ENCODE measurements at regions of chr4 and their contacts with region 1.

Region 1: DNA sequence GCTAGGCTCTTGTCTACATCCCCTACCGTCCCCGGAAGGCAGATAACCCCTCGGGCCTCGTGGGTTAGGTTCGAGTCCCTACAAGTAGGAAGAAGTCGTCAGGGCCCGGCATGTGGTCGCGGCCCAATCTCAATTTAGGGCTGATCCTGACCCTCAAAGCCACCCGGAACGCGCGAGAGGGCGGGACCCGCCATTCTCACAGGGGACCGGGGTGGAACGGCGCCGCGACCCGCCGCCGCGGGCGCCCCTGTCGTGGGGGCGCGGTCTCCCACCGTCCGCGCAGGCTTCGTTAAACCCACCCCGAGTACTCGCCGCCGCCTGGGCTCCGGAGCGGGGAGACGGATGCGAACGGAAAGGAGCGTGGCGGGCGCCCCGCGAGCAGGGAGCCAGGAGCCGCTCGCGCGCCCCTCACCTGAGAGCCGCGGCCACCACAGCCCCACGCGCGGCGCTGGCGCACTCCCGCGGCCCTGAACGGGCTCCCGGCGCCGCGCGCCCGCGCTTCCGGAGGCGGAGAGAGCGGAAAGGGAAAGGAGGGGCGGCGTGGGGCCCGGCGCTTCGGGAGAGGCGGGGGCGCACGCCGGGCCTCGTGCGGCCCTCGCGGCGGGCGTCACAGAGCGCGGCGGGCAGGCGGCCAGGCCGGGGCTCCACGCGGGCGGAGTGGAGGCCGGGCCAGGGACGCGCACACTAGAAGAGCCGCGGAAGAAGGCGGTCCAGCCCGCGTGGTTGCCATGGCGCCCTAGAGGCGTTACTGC is at the start of gene CFAP97:
- DNase-seq: peak; percentile 67 to 95 (median 82)
- ATAC-seq: peak; percentile 79
- H3K4me3 ChIP-seq: peak within 1 kb of the TSS; percentile 64 to 83
- H3K4me3 Mint-ChIP-seq: peak within 1 kb of the TSS; percentile 91
- H3K27ac ChIP-seq: peak within 1 kb of the TSS; percentile 83 to 87
- H3K27ac Mint-ChIP-seq: peak within 1 kb of the TSS; percentile 98
- H3K4me1 ChIP-seq: peaks cover 29% of the 10 kb centered on the region
- H3K4me1 Mint-ChIP-seq: peaks cover 49% of the 10 kb centered on the region
- H3K27me3 ChIP-seq: no peaks in the 10 kb centered on the region
- H3K27me3 Mint-ChIP-seq: no peaks in the 10 kb centered on the region
- CTCF ChIP-seq: no peak
- total RNA-seq, gene CFAP97: 18.8 to 20.4 TPM

Region 2: GRCh38 chr4:183504064-183504929 is 1699.4 kb before region 1 on chr4:
- CTCF ChIA-PET with region 1: no interaction called
- POLR2A ChIA-PET with region 1: no interaction called
- intact Hi-C with region 1: loop called (anchors 2 to 10 kb)
- DNase-seq: peak; percentile 99 to 100 (median 99)
- ATAC-seq: peak; percentile 78
- H3K4me3 ChIP-seq: peak overlapping the region; percentile 95 to 98
- H3K4me3 Mint-ChIP-seq: peak overlapping the region; percentile 98
- H3K27ac ChIP-seq: peak overlapping the region; percentile 84 to 98
- H3K27ac Mint-ChIP-seq: peak overlapping the region; percentile 99
- H3K4me1 ChIP-seq: peaks cover 14% of the 10 kb centered on the region
- H3K4me1 Mint-ChIP-seq: peaks cover 34% of the 10 kb centered on the region
- H3K27me3 ChIP-seq: no peaks in the 10 kb centered on the region
- H3K27me3 Mint-ChIP-seq: no peaks in the 10 kb centered on the region
- CTCF ChIP-seq: no peak

Region 3: DNA sequence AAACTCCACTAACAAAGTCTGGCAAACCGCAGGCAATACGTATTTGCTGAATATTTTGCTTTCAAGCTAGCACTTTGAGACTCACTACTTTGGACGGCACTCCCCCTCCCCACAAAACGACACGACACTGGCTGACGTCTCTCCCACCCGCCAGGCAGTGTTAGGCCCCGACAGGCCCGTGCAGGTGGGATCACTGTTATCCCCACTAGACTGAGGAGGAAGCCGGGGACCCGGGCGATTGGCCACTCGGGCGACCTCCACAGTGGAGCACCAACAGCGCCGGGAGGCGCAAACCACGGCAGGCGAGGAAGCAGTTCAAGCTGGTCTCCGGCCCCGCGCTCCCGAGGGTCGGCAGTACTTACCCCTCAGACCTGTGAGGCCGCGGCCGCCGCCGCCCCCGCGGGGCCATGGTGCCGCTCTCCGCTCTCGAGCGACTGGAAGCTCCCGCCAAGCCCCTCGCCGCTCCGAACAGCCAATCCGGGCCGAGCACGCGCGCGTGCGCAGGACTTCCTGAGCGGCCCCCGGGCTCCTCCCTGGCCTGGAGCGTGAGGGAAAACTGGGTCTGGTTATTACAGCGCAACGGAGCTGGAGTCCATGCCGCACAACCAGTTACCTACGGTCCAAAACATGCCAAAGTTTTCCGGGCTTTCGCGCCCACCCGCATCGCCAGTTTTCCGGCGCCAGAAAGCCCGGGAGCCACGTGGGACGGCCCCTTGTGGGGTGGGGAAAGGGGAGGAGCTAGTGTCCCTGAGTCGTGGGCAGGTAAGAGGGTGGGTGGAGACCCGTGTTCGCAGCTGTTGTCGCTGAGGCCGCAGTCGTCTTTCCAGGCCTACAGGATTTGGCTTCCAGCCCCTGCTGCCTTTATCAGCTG is 469.8 kb before region 1 on chr4 and contains the start of gene CENPU:
- CTCF ChIA-PET with region 1: no interaction called
- POLR2A ChIA-PET with region 1: no interaction called
- intact Hi-C with region 1: loop called (anchors 5 to 10 kb)
- DNase-seq: peak; percentile 87 to 97 (median 94)
- ATAC-seq: peak; percentile 95
- H3K4me3 ChIP-seq: peak within 1 kb of the TSS; percentile 74 to 79
- H3K4me3 Mint-ChIP-seq: peak within 1 kb of the TSS; percentile 87
- H3K27ac ChIP-seq: peak within 1 kb of the TSS; percentile 2 to 43
- H3K27ac Mint-ChIP-seq: peak within 1 kb of the TSS; percentile 84
- H3K4me1 ChIP-seq: peaks cover 8% of the 10 kb centered on the region
- H3K4me1 Mint-ChIP-seq: peaks cover 18% of the 10 kb centered on the region
- H3K27me3 ChIP-seq: no peaks in the 10 kb centered on the region
- H3K27me3 Mint-ChIP-seq: no peaks in the 10 kb centered on the region
- CTCF ChIP-seq: no peak
- total RNA-seq, gene CENPU: 3.4 TPM

Region 4: GRCh38 chr4:185183619-185184281 is 19.9 kb before region 1 on chr4:
- CTCF ChIA-PET with region 1: interaction called, 10 read pairs
- POLR2A ChIA-PET with region 1: no interaction called
- intact Hi-C with region 1: loop called in 1 of 2 experiments (anchors 1 kb)
- DNase-seq: peak; percentile 40 to 90 (median 78)
- ATAC-seq: peak; percentile 75
- H3K4me3 ChIP-seq: no peak overlapping the region
- H3K4me3 Mint-ChIP-seq: no peak overlapping the region
- H3K27ac ChIP-seq: no peak overlapping the region
- H3K27ac Mint-ChIP-seq: no peak overlapping the region
- H3K4me1 ChIP-seq: peaks cover 4% of the 10 kb centered on the region
- H3K4me1 Mint-ChIP-seq: peaks cover 36% of the 10 kb centered on the region
- H3K27me3 ChIP-seq: no peaks in the 10 kb centered on the region
- H3K27me3 Mint-ChIP-seq: no peaks in the 10 kb centered on the region
- CTCF ChIP-seq: peak; percentile 95

Region 5: DNA sequence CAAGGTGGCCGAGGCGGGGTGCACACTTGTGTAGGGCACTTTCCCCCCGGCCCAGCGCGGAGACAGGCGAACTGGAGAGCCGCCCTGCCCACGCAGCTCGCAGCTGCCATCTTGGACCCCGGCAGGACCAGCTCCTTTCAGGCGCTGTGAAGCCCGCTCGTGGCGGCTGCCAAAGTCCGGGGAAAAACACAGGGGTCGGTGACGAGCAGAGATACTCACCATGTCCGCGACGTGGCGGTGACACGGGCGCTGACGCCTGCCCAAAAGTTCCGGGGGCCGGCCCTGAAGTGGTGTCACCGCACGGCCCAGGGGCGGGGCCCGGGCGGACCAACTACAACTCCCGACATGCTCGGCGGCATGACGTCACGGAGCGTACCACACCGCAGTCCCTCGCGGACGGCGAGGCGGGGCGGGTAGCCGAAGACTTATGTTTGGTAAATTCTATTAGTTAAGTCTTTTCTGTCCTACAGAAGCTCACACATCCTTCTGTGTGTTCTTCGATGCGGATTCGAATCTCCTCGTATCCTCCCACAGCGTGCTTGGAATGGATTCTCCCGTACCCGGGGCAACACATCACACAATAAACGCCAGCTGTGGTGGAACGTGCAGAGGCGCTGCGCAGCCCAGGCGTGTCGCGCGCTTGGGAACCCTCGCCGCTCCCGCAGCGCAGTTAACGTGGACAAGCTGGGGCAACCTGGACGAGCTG is 222.1 kb after region 1 on chr4 and contains the start of gene UFSP2:
- CTCF ChIA-PET with region 1: no interaction called
- POLR2A ChIA-PET with region 1: no interaction called
- intact Hi-C with region 1: loop called (anchors 1 to 10 kb)
- DNase-seq: peak; percentile 75 to 97 (median 89)
- ATAC-seq: peak; percentile 86
- H3K4me3 ChIP-seq: peak within 1 kb of the TSS; percentile 87 to 90
- H3K4me3 Mint-ChIP-seq: peak within 1 kb of the TSS; percentile 83
- H3K27ac ChIP-seq: peak within 1 kb of the TSS; percentile 97 to 99
- H3K27ac Mint-ChIP-seq: peak within 1 kb of the TSS; percentile 100
- H3K4me1 ChIP-seq: peaks cover 18% of the 10 kb centered on the region
- H3K4me1 Mint-ChIP-seq: peaks cover 36% of the 10 kb centered on the region
- H3K27me3 ChIP-seq: no peaks in the 10 kb centered on the region
- H3K27me3 Mint-ChIP-seq: peaks cover 5% of the 10 kb centered on the region
- CTCF ChIP-seq: no peak
- total RNA-seq, gene UFSP2: 13.4 to 17.4 TPM

Region 6: GRCh38 chr4:186121057-186121456 is 917.4 kb after region 1 on chr4:
- CTCF ChIA-PET with region 1: no interaction called
- POLR2A ChIA-PET with region 1: no interaction called
- intact Hi-C with region 1: no loop called
- DNase-seq: no peak
- ATAC-seq: no peak
- H3K4me3 ChIP-seq: no peak overlapping the region
- H3K4me3 Mint-ChIP-seq: no peak overlapping the region
- H3K27ac ChIP-seq: no peak overlapping the region
- H3K27ac Mint-ChIP-seq: no peak overlapping the region
- H3K4me1 ChIP-seq: no peaks in the 10 kb centered on the region
- H3K4me1 Mint-ChIP-seq: no peaks in the 10 kb centered on the region
- H3K27me3 ChIP-seq: peaks cover 0 to 3% of the 10 kb centered on the region in 2 experiments
- H3K27me3 Mint-ChIP-seq: peaks cover 19% of the 10 kb centered on the region
- CTCF ChIP-seq: no peak

Measured in CD8-positive, alpha-beta T cell (primary cell).